WTC11 (cell line): ENCODE measurements at regions of chr2 and their contacts with region 1.

Region 1: DNA sequence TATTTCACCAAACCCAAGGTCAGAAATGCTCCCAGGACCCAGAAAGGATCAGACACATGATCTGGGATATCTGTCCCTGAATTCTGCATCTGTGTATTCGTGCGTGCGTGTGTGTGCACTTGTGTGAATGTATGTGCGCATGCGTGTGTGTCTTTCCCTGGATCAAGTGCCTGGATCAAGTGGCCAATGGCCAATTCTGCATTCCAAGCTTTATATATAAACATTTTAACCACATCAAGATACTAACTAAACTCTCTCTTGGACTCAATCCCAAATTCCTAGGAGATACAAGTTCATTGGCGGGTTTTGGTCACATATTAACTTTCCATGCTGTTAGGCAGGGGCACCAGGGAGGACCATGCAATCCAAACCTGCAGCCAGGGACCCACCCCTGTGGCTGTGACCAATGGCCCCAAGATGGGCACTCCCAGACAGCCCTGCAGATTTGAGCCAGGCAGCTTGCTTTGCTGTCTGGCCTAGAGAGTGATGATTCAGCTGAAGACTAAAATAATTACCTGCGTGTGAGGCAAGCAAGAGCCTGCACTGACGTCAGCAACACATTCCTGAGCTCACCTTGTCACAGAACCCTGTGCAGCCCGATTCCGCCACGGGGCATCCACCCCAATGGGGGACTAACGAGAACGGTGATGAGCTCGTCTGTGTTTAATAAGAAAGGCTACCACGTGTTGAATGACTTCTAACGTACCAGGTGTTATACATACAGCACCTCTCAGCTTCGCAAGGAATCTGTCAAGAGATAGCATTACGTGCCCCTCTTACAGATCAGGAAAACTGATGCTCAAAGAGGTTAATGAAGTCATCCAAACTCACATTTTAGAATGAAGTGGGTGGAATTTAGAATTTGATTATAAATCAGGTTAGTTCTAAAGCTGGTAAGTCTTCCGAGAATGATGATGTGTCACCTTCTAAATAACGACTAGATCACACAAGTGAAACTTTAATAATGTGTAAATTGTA is 45.4 kb upstream of the ROCK2 start:
- DNase-seq: no peak
- ATAC-seq: no peak
- H3K4me3 Mint-ChIP-seq: no peak overlapping the region
- H3K27ac Mint-ChIP-seq: peak overlapping the region; percentile 38; the same call in 1 of the 2 replicates
- H3K4me1 Mint-ChIP-seq: peaks cover 44% of the 10 kb centered on the region
- H3K27me3 Mint-ChIP-seq: no peaks in the 10 kb centered on the region
- CTCF ChIP-seq: no peak

Region 2: DNA sequence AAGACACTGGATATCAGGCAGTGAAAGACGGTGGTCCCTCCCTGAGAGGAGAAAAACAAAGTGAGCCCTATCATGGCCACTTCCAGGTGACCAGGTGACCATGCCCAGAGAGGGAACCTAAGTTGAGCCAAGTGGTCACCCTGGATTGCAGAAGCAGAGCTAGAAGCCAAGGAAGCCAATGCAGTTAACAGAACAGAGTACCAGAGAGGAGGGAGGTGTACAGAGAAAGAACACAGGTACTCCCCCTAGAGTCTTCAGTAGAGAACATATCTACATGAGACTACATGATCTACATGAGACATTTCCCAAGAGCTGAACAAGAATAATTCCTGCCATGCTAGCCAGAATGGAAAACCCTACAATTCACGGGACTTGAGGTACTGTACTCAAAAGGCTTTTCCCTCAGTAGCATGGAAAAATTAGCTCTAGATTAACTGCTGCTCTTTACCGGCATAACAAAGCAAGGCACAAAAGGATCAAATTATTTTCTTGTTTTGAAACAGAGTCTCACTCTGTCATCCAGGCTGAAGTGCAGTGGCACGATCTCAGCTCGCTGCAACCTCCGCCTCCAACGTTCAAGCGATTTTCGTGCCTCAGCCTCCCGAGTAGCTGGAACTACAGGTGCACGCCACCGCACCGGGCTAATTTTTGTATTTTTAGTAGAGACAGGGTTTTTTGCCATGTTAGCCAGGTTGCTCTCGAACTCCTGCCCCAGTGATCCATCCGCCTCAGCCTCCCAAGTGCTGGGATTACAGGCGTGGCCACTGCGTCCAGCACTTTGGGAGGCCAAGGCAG is 68.9 kb before region 1 on chr2:
- CTCF ChIA-PET with region 1: no interaction called
- POLR2A ChIA-PET with region 1: no interaction called
- DNase-seq: no peak
- ATAC-seq: peak; percentile 79
- H3K4me3 Mint-ChIP-seq: no peak overlapping the region
- H3K27ac Mint-ChIP-seq: no peak overlapping the region
- H3K4me1 Mint-ChIP-seq: peaks cover 10% of the 10 kb centered on the region; the same call in 1 of the 2 replicates
- H3K27me3 Mint-ChIP-seq: no peaks in the 10 kb centered on the region
- CTCF ChIP-seq: no peak

Region 3: DNA sequence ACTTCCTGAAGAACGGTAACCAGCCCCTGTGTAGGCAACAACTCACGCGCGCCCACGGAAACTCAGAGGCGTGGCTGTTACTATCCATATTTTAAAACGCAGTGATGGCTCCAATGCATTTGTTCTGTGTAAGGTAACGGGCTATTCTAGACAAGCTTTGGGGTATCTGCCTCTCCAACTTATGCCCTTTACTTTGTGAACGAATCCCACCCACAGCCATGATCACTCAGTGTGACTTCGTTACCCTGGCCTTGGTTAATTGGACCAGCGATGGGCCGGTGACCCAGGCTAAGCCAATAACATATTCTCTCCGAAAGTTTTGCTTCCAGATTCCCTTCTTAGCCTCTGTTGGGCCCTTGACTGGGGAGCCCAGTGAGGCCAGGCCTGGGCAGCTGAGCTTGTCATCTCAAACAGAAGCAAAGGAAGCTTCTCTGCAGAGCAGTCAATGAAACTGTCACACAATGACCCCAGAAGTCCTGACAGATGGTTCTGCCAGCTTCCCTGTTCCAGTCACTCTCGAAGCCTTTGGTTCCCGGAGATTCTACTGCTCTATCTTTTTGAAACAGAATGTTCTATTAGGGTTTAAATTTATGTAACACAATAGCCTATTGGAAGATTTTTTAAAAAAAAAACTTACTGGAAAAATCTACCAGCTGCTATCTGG is 14.7 kb before region 1 on chr2:
- CTCF ChIA-PET with region 1: interaction called, 12 read pairs
- POLR2A ChIA-PET with region 1: no interaction called
- DNase-seq: no peak
- ATAC-seq: no peak
- H3K4me3 Mint-ChIP-seq: no peak overlapping the region
- H3K27ac Mint-ChIP-seq: no peak overlapping the region
- H3K4me1 Mint-ChIP-seq: peaks cover 18% of the 10 kb centered on the region
- H3K27me3 Mint-ChIP-seq: no peaks in the 10 kb centered on the region
- CTCF ChIP-seq: no peak

Region 4: GRCh38 chr2:11437602-11438001 is 47.8 kb after region 1 on chr2:
- CTCF ChIA-PET with region 1: no interaction called
- POLR2A ChIA-PET with region 1: no interaction called
- DNase-seq: no peak
- ATAC-seq: no peak
- H3K4me3 Mint-ChIP-seq: no peak overlapping the region
- H3K27ac Mint-ChIP-seq: no peak overlapping the region
- H3K4me1 Mint-ChIP-seq: no peaks in the 10 kb centered on the region
- H3K27me3 Mint-ChIP-seq: no peaks in the 10 kb centered on the region; the same call in 1 of the 2 replicates
- CTCF ChIP-seq: no peak